ENCODE measurements at regions of chr1 and their contacts with region 1.

Region 1: GRCh38 chr1:110668549-110668948 is 6.2 kb downstream of the KCNA3 start:
- DNase-seq: peak; percentile 17
- ATAC-seq: no peak
- H3K4me3 Mint-ChIP-seq: peak overlapping the region; percentile 63
- H3K27ac Mint-ChIP-seq: peak overlapping the region; percentile 44
- H3K4me1 Mint-ChIP-seq: peaks cover 44% of the 10 kb centered on the region
- H3K27me3 Mint-ChIP-seq: no peaks in the 10 kb centered on the region

Region 2: GRCh38 chr1:110657351-110657750 is 11.2 kb before region 1 on chr1:
- CTCF ChIA-PET with region 1: interaction called, 9 read pairs
- POLR2A ChIA-PET with region 1: no interaction called
- intact Hi-C with region 1: loop called in 1 of 2 experiments (anchors 1 kb)
- DNase-seq: no peak
- ATAC-seq: peak; percentile 91
- H3K4me3 Mint-ChIP-seq: no peak overlapping the region
- H3K27ac Mint-ChIP-seq: no peak overlapping the region
- H3K4me1 Mint-ChIP-seq: peaks cover 35% of the 10 kb centered on the region
- H3K27me3 Mint-ChIP-seq: no peaks in the 10 kb centered on the region